Naive thymus-derived CD4-positive, alpha-beta T cell (primary cell): ENCODE measurements at regions of chr3 and their contacts with region 1.

Region 1: DNA sequence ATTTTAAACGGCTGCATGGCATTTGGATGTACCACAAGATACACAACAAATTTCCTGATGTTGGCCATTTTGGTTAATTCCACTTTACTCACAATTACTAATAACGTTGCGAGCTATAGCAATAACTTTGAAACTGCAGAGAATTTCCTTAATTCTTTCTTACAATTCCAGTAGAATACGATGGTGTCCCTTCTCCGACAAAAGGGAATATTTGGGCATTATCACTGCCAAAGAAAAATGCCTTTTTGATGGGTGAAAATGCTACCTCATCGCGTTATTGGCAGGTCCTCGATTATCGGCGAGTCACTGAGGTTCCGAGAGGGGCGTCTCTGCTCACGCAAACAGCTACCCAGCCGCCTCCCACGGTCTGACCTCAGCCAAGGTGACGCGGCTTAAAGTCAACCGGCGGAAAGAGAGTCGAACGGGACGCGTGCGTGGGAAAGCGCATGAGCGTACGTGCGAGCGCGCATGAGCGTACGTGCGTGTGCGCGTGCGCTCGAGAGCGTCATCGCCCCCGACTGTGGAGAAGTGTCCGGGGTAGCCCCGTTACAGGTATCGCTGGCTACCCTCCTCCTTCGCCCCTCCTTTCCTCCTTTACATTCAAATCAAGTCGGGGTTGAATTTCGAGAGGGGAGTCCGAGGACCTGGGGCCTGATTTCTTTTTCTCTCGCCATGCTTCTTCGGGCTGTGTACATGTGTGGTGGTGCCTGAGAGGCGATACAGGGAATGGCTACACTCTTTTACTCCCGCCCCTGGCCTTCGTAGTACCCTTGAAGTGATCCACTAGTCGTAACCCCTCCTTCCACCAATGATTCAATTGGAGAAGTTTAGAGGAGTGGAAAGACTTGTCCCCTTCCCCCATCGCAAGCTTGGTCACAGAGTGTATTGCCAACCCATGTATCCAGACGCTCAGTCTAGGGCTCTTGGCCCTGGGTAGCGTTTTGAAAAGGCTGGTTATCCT is at the start of gene OXSM:
- DNase-seq: peak; percentile 66 to 92 (median 86)
- ATAC-seq: peak; percentile 96
- H3K4me3 ChIP-seq: peak within 1 kb of the TSS; percentile 80
- H3K4me3 Mint-ChIP-seq: peak within 1 kb of the TSS; percentile 87 to 100 (median 98)
- H3K27ac ChIP-seq: peak within 1 kb of the TSS; percentile 91
- H3K27ac Mint-ChIP-seq: peak within 1 kb of the TSS; percentile 81 to 100 (median 98)
- H3K4me1 ChIP-seq: peaks cover 6 to 20% of the 10 kb centered on the region in 2 donors
- H3K4me1 Mint-ChIP-seq: peaks cover 14 to 59% (median 52%) of the 10 kb centered on the region in 7 donors
- H3K27me3 ChIP-seq: no peaks in the 10 kb centered on the region
- H3K27me3 Mint-ChIP-seq: no peaks in the 10 kb centered on the region
- total RNA-seq, gene OXSM: 10.6 to 16.5 (median 13.2) TPM

Region 2: GRCh38 chr3:23916886-23917678 is 1872.8 kb before region 1 on chr3 and contains the starts of genes NKIRAS1 and RPL15:
- CTCF ChIA-PET with region 1: no interaction called
- POLR2A ChIA-PET with region 1: interaction called, 5 read pairs
- intact Hi-C with region 1: loop called in 1 of 2 experiments (anchors 10 kb)
- DNase-seq: peak; percentile 90 to 98 (median 97)
- ATAC-seq: peak; percentile 97
- H3K4me3 ChIP-seq: peak within 1 kb of the TSS; percentile 88
- H3K4me3 Mint-ChIP-seq: peak within 1 kb of the TSS; percentile 92 to 100 (median 98)
- H3K27ac ChIP-seq: peak within 1 kb of the TSS; percentile 83
- H3K27ac Mint-ChIP-seq: peak within 1 kb of the TSS; percentile 97 to 99 (median 98)
- H3K4me1 ChIP-seq: peaks cover 14 to 18% of the 10 kb centered on the region in 2 donors
- H3K4me1 Mint-ChIP-seq: peaks cover 33 to 52% (median 49%) of the 10 kb centered on the region in 7 donors
- H3K27me3 ChIP-seq: no peaks in the 10 kb centered on the region
- H3K27me3 Mint-ChIP-seq: peaks cover 0 to 4% (median 0%) of the 10 kb centered on the region in 5 donors
- total RNA-seq, gene NKIRAS1: 2.2 to 6.4 (median 3.2) TPM
- total RNA-seq, gene RPL15: 1,489 to 2,250 (median 2,129) TPM

Region 3: DNA sequence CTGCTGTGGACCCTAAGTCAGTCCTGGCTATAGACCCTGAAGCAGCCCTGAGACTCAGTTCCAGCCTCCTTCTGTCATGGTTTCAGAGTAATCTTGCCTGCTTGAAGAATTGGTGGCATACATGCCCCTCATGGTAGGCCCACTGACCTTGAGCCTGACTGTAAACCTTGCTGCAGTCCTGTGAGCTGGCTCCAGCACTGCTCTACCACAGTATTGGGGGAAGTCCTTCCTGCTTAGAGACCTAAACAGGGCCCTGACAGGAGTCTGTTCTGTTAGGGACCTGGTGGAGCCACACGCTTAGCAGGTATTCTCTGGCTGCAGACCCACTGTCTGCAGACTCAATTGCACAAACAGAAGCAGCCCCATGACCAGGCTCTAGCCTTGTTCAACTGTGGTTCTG is 47.2 kb after region 1 on chr3:
- CTCF ChIA-PET with region 1: interaction called, 3 read pairs
- POLR2A ChIA-PET with region 1: no interaction called
- intact Hi-C with region 1: loop called in 1 of 2 experiments (anchors 5 kb)
- DNase-seq: no peak
- ATAC-seq: no peak
- H3K4me3 ChIP-seq: no peak overlapping the region
- H3K4me3 Mint-ChIP-seq: no peak overlapping the region
- H3K27ac ChIP-seq: no peak overlapping the region
- H3K27ac Mint-ChIP-seq: no peak overlapping the region
- H3K4me1 ChIP-seq: no peaks in the 10 kb centered on the region
- H3K4me1 Mint-ChIP-seq: peaks cover 3 to 12% (median 7%) of the 10 kb centered on the region in 7 donors
- H3K27me3 ChIP-seq: no peaks in the 10 kb centered on the region
- H3K27me3 Mint-ChIP-seq: peaks cover 5 to 19% (median 7%) of the 10 kb centered on the region in 5 donors

Region 4: DNA sequence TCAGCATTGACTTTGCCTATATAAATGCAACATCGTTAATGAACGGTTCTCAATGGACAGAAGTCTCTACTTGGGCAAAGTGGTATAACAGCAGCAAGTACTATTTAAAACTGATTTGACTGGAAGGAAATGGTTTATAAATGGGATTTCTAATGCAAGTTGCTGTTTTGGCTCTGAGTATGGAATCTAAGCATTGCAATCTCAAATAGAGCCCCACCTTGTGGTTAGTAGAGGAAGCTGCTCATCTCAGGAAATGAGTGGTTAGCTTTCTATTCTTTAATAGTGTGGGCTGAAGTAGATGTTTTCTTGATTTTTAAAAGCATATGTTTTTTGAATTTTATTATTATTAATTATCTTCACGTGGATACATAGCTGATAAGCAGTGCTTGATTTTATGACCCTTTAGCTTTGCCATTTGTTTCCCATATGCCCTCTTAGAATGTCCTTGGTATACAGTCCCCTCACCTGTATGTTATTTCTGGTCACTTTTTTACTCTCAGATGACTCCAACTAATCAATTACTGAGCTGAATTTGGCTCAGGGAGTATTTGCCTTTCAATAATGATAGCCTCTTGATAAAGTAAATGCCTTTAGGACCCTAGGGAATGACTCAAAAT is 67.1 kb after region 1 on chr3:
- CTCF ChIA-PET with region 1: no interaction called
- POLR2A ChIA-PET with region 1: no interaction called
- intact Hi-C with region 1: loop called (anchors 1 to 2 kb)
- DNase-seq: peak in 7 of 9 donors; percentile 10 to 56 (median 37)
- ATAC-seq: peak; percentile 87
- H3K4me3 ChIP-seq: no peak overlapping the region
- H3K4me3 Mint-ChIP-seq: no peak overlapping the region
- H3K27ac ChIP-seq: no peak overlapping the region
- H3K27ac Mint-ChIP-seq: no peak overlapping the region
- H3K4me1 ChIP-seq: no peaks in the 10 kb centered on the region
- H3K4me1 Mint-ChIP-seq: peaks cover 0 to 3% (median 0%) of the 10 kb centered on the region in 7 donors
- H3K27me3 ChIP-seq: no peaks in the 10 kb centered on the region
- H3K27me3 Mint-ChIP-seq: no peaks in the 10 kb centered on the region

Region 5: DNA sequence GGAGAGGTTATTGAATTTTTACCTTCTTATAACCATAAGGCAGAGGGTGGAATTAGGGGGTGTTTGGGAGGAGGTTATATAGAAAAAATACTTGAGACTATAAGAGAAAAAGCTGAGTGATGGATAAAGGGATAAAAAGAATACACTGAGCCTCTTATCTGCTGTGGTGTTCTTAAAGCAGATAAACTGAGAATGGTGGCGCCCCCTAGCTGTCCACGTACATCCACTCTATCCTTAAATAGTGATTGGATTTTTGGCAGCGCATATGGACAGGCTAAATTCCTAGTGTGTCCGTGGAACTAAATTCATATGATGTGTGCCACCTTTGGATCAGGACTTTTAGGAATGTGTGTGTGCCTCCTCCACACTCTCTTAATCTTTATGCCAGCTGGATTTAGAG is 121.1 kb after region 1 on chr3:
- CTCF ChIA-PET with region 1: no interaction called
- POLR2A ChIA-PET with region 1: no interaction called
- intact Hi-C with region 1: no loop called
- DNase-seq: peak in 7 of 9 donors; percentile 8 to 29 (median 23)
- ATAC-seq: peak; percentile 49
- H3K4me3 ChIP-seq: no peak overlapping the region
- H3K4me3 Mint-ChIP-seq: no peak overlapping the region
- H3K27ac ChIP-seq: no peak overlapping the region
- H3K27ac Mint-ChIP-seq: no peak overlapping the region
- H3K4me1 ChIP-seq: peaks cover 0 to 10% of the 10 kb centered on the region in 2 donors
- H3K4me1 Mint-ChIP-seq: peaks cover 0 to 10% (median 8%) of the 10 kb centered on the region in 7 donors
- H3K27me3 ChIP-seq: no peaks in the 10 kb centered on the region
- H3K27me3 Mint-ChIP-seq: peaks cover 0 to 11% (median 0%) of the 10 kb centered on the region in 5 donors